ENCODE measurements at regions of chr13 and their contacts with region 1.

Region 1: DNA sequence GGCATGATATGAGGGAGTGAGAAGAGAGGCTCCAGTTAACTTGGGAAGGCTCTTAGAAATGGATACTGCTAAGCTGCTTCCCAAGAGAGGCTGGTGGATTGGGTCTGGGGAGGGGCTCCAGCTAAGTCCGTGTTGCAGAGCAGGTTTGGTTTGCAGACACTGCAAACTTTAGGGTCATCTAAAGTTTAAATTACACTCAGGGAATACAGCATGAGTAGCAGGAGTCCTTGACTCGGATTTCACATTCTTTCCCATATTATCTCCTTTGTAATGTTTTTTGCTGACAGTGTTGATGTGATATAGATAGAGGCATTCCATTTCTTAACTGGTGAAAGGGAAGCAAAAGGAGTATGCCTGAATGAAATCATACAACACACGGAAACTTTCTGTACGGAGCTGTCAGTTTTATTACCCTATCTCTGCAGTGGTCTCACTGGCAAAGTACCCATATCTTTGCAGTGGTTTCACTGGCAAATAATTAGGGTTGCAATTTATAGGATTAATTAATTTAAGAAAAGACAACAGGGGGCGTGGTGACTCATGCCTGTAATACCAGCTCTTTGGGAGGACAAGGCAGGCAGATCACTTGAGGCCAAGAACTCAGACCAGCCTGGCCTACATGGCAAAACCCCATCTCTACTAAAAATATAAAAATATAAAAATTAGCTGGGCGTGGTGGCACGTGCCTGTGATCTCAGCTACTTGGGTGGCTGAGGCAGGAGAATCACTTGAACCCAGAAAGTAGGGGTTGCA is 32.1 kb downstream of the SGCG start:
- DNase-seq: no peak
- ATAC-seq: no peak
- H3K4me3 ChIP-seq: no peak overlapping the region
- H3K27ac ChIP-seq: no peak overlapping the region
- H3K4me1 ChIP-seq: no peaks in the 10 kb centered on the region
- H3K27me3 ChIP-seq: no peaks in the 10 kb centered on the region
- CTCF ChIP-seq: no peak
- EP300 ChIP-seq: no peak
- POLR2A ChIP-seq: no peak
- RAD21 ChIP-seq: no peak

Region 2: GRCh38 chr13:23279321-23279720 is 66.5 kb after region 1 on chr13:
- CTCF ChIA-PET with region 1: no interaction called
- POLR2A ChIA-PET with region 1: no interaction called
- in situ Hi-C with region 1: no loop called
- intact Hi-C with region 1: loop called (anchors 10 kb)
- DNase-seq: no peak
- ATAC-seq: no peak
- H3K4me3 ChIP-seq: no peak overlapping the region
- H3K27ac ChIP-seq: no peak overlapping the region
- H3K4me1 ChIP-seq: no peaks in the 10 kb centered on the region
- H3K27me3 ChIP-seq: no peaks in the 10 kb centered on the region
- CTCF ChIP-seq: no peak
- EP300 ChIP-seq: no peak
- POLR2A ChIP-seq: no peak
- RAD21 ChIP-seq: no peak

Measured in K562 (cell line).